Calu3 (cell line): ENCODE measurements at regions of chr17 and their contacts with region 1.

Region 1: DNA sequence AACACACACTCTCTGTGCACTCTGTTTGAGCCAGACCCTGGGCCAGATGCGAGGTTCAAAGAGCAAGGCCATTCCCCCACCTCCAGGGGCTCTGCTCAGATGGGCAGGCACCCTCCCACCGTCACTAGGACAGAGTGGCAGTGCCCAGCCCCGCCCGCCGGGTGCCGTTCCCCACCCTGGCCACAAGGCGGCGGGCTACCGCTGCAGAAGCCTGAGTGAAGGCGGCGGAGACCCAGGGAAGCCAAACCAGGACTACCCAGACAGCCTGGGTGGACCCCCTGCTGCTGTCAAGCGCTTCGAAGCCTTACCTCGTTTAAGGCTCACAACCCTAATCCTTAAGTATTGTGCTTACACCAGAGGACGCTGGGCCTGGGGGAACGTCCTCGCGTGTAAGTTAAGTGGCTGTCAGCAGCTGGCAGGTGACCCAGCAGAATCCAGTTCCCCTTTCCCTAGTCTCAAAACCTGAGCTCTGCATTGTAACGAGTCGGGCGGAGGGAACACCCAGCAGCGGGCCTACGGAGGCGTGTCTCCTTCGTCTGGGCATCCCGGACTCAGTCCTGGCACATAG is 4.5 kb downstream of the ARHGAP27 start:
- DNase-seq: peak; percentile 96
- H3K4me3 Mint-ChIP-seq: peak overlapping the region; percentile 44
- H3K27ac Mint-ChIP-seq: peak overlapping the region; percentile 71
- H3K4me1 Mint-ChIP-seq: peaks cover 65% of the 10 kb centered on the region
- H3K27me3 Mint-ChIP-seq: no peaks in the 10 kb centered on the region
- CTCF ChIP-seq: peak; percentile 100

Region 2: DNA sequence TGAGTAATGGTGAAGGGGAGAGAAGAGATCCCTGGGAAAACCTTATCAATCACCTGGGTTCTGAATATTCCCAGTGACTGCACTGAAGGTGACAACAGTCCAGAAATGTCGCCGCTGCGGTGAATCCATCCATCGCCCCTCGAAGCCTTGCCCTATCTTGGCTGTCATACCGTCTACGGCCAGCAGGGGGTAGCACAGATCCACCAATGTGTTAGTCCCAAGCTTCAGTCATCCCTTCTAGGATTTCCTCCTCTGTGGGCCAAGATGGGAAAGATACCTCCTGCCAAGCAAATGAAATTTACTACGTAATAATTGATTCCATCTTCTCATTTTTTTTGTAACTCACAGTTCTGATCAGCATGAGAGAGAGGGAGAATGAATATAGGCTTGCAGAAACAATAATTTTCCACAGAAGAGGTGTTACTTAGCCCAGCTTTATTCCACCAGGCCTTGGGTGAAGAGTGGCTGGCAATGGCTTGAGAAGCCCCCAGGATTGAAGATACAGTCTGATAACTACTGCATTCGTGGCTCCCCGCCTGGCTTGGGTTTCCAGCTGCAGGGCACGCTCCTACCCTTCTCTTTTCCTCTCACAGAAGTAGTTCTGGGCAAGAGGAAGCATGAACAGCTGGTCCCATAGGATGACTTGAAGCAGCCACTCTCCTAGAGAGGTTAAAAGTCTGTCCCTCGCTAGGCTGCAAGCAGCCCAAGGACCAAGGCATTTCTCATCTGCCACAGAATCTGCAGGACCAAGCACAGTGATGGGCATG is 209.1 kb before region 1 on chr17:
- CTCF ChIA-PET with region 1: interaction called, 14 read pairs
- intact Hi-C with region 1: loop called (anchors 1 kb)
- DNase-seq: peak; percentile 95
- H3K4me3 Mint-ChIP-seq: no peak overlapping the region
- H3K27ac Mint-ChIP-seq: no peak overlapping the region
- H3K4me1 Mint-ChIP-seq: no peaks in the 10 kb centered on the region
- H3K27me3 Mint-ChIP-seq: peaks cover 43% of the 10 kb centered on the region
- CTCF ChIP-seq: peak; percentile 98

Region 3: GRCh38 chr17:45394913-45395568 is 33.1 kb before region 1 on chr17:
- CTCF ChIA-PET with region 1: interaction called, 44 read pairs
- intact Hi-C with region 1: no loop called
- DNase-seq: peak; percentile 73
- H3K4me3 Mint-ChIP-seq: no peak overlapping the region
- H3K27ac Mint-ChIP-seq: peak overlapping the region; percentile 37
- H3K4me1 Mint-ChIP-seq: peaks cover 6% of the 10 kb centered on the region
- H3K27me3 Mint-ChIP-seq: no peaks in the 10 kb centered on the region
- CTCF ChIP-seq: peak; percentile 94

Region 4: GRCh38 chr17:45410144-45411091 is 17.7 kb before region 1 on chr17:
- CTCF ChIA-PET with region 1: interaction called, 20 read pairs
- intact Hi-C with region 1: no loop called
- DNase-seq: no peak
- H3K4me3 Mint-ChIP-seq: no peak overlapping the region
- H3K27ac Mint-ChIP-seq: peak overlapping the region; percentile 20
- H3K4me1 Mint-ChIP-seq: peaks cover 79% of the 10 kb centered on the region
- H3K27me3 Mint-ChIP-seq: no peaks in the 10 kb centered on the region
- CTCF ChIP-seq: no peak

Region 5: DNA sequence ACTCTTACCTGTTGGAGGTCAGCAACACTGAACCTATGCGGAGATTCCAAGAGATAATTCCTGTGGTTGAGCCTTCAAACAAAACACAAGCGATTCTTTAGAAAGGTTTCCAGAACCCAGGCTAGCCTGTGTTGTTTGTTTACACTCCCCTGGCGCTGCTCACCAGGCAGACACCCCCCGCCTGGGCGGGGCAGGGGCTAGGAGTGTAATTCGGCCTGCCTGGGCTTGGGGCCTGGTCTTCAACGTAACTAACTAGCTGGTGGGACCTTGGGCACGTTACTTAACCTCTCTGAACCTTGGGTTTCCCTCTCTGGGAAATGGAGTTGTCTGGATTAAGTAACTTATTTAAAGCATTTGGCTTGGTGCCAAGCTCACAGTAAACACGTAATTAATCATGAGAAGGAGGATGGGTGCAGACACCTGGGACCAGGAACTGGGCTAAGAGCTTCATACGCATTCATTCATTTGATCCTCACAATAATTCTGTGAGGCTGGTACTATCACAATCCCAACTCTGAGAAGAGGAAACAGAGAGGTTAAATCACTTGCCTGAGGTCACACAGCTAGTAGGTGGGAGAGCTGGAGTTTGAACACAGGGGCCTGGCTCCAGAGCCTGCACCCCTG is 12.1 kb after region 1 on chr17:
- CTCF ChIA-PET with region 1: interaction called, 10 read pairs
- intact Hi-C with region 1: no loop called
- DNase-seq: peak; percentile 82
- H3K4me3 Mint-ChIP-seq: peak overlapping the region; percentile 34
- H3K27ac Mint-ChIP-seq: peak overlapping the region; percentile 66
- H3K4me1 Mint-ChIP-seq: peaks cover 46% of the 10 kb centered on the region
- H3K27me3 Mint-ChIP-seq: no peaks in the 10 kb centered on the region
- CTCF ChIP-seq: no peak